HEK293 (cell line): ENCODE measurements at regions of chr9 and their contacts with region 1.

Region 1: DNA sequence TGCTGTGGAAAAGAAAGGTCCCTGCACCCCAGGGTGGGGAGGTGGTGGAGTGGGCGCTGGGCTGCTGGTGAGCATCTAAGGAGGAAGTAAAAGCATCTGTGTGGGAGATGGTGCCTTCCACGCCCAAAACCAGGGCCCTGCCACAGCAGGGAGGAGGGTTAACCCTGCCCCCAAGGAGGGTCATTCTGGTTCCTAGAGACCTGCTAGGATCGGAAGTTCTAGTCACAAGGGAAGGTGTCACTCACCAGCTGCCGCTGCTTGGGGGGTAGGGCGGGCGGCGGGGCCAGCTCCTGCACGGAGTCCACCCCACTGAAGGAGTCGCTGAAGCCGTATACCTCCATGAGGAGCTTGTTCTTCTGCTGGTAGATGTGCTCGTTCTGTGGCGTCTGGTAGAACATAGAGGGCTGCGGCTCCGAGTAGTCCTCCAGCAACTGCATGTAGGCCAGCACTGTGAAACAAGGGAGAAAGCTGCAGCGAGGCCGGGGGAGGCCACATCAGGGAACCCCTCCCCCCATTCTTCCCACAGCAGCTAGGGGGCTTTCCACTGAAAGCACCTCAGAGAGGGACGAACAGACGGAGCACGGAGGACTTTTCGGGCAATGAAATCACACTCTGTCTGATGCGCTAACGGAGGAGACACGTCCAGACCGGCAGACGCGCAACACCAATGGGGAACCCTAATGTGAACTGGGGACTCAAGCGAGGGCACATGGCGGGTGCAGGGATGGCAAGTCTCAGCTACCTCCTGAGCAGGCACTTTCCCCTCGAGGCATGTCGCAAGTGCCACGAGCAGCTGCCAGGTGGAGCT is 76.4 kb downstream of the PRRT1B start:
- H3K4me3 ChIP-seq: no peak overlapping the region
- H3K27ac ChIP-seq: no peak overlapping the region
- H3K4me1 ChIP-seq: peaks cover 2% of the 10 kb centered on the region; the same call in 1 of the 2 replicates
- CTCF ChIP-seq: no peak

Region 2: DNA sequence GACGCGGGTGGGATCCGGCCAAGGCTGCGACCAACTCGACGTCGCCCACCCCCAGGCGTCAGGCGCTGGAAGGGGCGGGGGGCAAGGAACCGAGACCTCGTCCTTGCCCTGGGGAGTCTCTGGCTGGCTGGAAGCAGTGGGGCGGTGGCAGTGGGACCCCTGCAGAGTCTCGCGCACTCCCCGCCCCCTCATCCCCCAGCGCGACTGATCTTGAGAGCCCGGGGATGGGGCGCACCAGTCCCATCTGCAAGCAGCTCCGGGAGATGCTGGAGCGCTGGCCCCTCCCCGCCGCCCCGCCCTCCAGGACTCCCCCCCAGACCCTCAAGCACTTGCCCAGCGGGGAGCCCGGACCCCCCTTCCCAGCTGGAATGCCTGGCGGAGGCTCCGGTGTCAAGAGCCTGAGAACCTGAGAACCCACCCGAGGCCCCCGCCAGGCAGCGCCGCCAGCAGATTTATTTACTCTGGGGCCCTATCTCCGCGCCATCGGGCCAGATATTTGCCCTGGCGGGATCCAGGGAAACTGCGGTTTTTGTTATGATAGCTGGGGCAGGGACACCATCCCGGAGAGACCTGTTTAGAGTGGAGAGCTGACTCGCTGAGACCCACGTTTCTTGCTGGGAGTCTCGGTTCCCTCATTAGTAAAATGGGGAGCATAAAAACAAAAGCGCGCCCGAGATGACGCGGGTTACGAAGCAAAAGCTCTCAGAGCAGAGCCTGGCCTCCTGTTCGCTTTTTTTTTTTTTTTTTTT is 75.2 kb before region 1 on chr9:
- CTCF ChIA-PET with region 1: no interaction called
- POLR2A ChIA-PET with region 1: no interaction called
- H3K4me3 ChIP-seq: peak overlapping the region; percentile 28
- H3K27ac ChIP-seq: peak overlapping the region; percentile 36; the same call in 1 of the 2 replicates
- H3K4me1 ChIP-seq: 0 out of 2 replicates have a peak, but pooled peaks cover 3% of the 10 kb centered on the region
- CTCF ChIP-seq: no peak

Region 3: GRCh38 chr9:131608493-131609037 is 13.2 kb before region 1 on chr9:
- CTCF ChIA-PET with region 1: interaction called, 16 read pairs
- POLR2A ChIA-PET with region 1: interaction called, 4 read pairs
- H3K4me3 ChIP-seq: no peak overlapping the region
- H3K27ac ChIP-seq: no peak overlapping the region
- H3K4me1 ChIP-seq: no peaks in the 10 kb centered on the region
- CTCF ChIP-seq: no peak

Region 4: GRCh38 chr9:131982671-131983239 is 361.0 kb after region 1 on chr9:
- CTCF ChIA-PET with region 1: no interaction called
- POLR2A ChIA-PET with region 1: no interaction called
- H3K4me3 ChIP-seq: no peak overlapping the region
- H3K27ac ChIP-seq: no peak overlapping the region
- H3K4me1 ChIP-seq: peaks cover 7% of the 10 kb centered on the region
- CTCF ChIP-seq: no peak